ENCODE measurements at regions of chr1 and their contacts with region 1.

Region 1: DNA sequence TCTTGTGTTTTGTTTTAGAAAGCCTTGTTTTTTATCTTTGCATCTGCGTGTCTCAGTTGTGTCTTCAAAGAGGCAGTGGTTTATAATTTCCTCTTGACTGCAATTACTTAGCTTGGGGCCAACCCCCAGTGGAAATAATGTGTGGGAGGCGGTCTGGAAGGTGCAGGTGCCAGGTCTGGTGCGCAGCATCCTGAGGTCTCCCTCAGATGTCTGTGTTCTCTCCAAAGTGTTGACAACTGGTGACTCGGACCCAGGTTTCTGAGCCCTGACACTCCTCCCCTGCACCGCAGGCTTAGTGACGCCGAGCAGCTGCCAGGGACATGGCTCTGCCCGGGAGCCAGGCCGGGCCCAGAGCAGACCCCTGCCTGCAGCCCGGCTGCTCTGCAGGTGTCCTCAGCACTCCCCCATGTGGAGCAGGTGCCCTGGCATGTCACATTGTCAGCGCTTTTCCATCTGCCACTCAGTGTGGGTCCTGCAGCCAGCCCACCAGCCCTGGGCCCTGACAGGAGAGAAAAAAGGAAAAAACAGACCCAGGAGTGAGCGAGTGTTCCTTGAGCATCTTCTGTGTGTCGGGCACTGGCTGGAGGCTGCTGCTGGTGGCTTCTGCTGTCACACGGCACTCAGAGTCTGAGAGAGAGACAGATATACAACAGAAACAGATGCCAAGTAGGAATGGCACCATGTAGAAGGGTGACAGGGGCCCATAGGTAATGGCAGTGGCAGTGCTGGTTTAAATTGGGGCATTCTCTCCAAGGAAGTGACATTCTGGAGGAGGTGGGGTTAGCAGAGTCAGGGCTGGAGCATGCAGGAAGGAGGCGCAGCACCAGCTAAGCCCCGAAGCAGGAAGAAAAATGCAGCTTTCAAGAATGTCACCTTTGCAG is 24.8 kb upstream of the SELENON start:
- DNase-seq: peak; percentile 60 to 96 (median 84)
- ATAC-seq: peak; percentile 86
- H3K4me3 ChIP-seq: peak overlapping the region in 1 of 2 experiments; percentile 59
- H3K4me3 Mint-ChIP-seq: peak overlapping the region; percentile 83
- H3K27ac ChIP-seq: peak overlapping the region; percentile 44 to 92
- H3K27ac Mint-ChIP-seq: peak overlapping the region; percentile 99
- H3K4me1 ChIP-seq: peaks cover 63% of the 10 kb centered on the region
- H3K4me1 Mint-ChIP-seq: peaks cover 76% of the 10 kb centered on the region
- H3K27me3 ChIP-seq: no peaks in the 10 kb centered on the region
- H3K27me3 Mint-ChIP-seq: no peaks in the 10 kb centered on the region
- CTCF ChIP-seq: no peak

Region 2: GRCh38 chr1:25608488-25609178 is 166.5 kb before region 1 on chr1:
- CTCF ChIA-PET with region 1: interaction called, 12 read pairs
- POLR2A ChIA-PET with region 1: interaction called, 5 read pairs
- intact Hi-C with region 1: loop called in 1 of 2 experiments (anchors 2 kb)
- DNase-seq: peak; percentile 63 to 93 (median 90)
- ATAC-seq: peak; percentile 99
- H3K4me3 ChIP-seq: no peak overlapping the region
- H3K4me3 Mint-ChIP-seq: no peak overlapping the region
- H3K27ac ChIP-seq: no peak overlapping the region
- H3K27ac Mint-ChIP-seq: no peak overlapping the region
- H3K4me1 ChIP-seq: peaks cover 3% of the 10 kb centered on the region
- H3K4me1 Mint-ChIP-seq: peaks cover 12% of the 10 kb centered on the region
- H3K27me3 ChIP-seq: no peaks in the 10 kb centered on the region
- H3K27me3 Mint-ChIP-seq: no peaks in the 10 kb centered on the region
- CTCF ChIP-seq: no peak

Region 3: GRCh38 chr1:25675729-25676476 is 99.3 kb before region 1 on chr1:
- CTCF ChIA-PET with region 1: interaction called, 6 read pairs
- POLR2A ChIA-PET with region 1: interaction called, 8 read pairs
- intact Hi-C with region 1: loop called (anchors 5 kb)
- DNase-seq: peak; percentile 36 to 90 (median 74)
- ATAC-seq: peak; percentile 80
- H3K4me3 ChIP-seq: peak overlapping the region; percentile 14 to 41
- H3K4me3 Mint-ChIP-seq: peak overlapping the region; percentile 80
- H3K27ac ChIP-seq: peak overlapping the region; percentile 38 to 45
- H3K27ac Mint-ChIP-seq: peak overlapping the region; percentile 94
- H3K4me1 ChIP-seq: peaks cover 71% of the 10 kb centered on the region
- H3K4me1 Mint-ChIP-seq: peaks cover 88% of the 10 kb centered on the region
- H3K27me3 ChIP-seq: no peaks in the 10 kb centered on the region
- H3K27me3 Mint-ChIP-seq: no peaks in the 10 kb centered on the region
- CTCF ChIP-seq: no peak

Region 4: DNA sequence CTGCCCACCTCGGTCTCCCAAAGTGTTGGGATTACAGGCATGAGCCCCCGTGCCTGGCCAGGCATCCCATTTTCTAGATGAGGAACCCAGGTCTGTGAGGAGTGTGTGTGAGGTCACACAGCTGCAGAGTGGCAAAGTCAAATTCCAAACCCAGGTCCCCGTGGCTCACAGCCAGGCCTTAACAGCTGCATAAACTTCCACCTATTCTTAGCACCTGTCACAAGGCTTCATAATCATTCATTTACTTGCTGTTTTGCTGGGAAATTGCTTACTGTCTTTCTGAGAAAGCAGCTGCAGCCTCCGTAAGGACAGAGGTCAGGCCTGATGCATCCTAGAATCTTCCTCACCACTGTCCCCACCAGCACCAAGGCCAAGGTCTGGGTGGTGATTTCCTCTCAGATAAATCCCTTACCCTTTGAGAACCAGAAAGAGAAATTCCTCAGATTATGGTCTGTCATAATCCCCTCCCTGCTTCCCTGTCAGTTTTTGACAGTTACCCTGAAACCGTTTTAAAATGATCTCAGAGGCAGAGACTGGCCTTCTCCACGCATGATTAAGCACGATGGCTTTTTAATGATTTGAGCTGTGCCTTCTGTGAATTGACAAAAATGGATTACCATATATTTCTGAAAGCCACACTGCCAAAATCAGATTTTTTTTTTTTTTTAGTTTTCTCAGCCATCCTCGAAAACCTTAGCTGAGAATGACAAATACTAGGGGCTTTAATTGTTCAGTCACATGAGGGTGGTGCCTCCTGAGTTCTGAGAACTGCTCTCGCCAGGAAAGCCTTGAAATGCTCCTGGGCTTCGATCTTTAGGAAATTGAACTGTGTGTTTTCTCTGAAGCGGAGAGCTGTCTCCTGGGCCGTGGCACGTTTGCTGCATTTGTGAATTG is 45.2 kb before region 1 on chr1:
- CTCF ChIA-PET with region 1: interaction called, 3 read pairs
- POLR2A ChIA-PET with region 1: no interaction called
- intact Hi-C with region 1: loop called in 1 of 2 experiments (anchors 2 kb)
- DNase-seq: no peak
- ATAC-seq: peak; percentile 16
- H3K4me3 ChIP-seq: no peak overlapping the region
- H3K4me3 Mint-ChIP-seq: peak overlapping the region; percentile 18
- H3K27ac ChIP-seq: no peak overlapping the region
- H3K27ac Mint-ChIP-seq: peak overlapping the region; percentile 41
- H3K4me1 ChIP-seq: peaks cover 44% of the 10 kb centered on the region
- H3K4me1 Mint-ChIP-seq: peaks cover 76% of the 10 kb centered on the region
- H3K27me3 ChIP-seq: peaks cover 0 to 4% of the 10 kb centered on the region in 2 experiments
- H3K27me3 Mint-ChIP-seq: no peaks in the 10 kb centered on the region
- CTCF ChIP-seq: no peak

Region 5: DNA sequence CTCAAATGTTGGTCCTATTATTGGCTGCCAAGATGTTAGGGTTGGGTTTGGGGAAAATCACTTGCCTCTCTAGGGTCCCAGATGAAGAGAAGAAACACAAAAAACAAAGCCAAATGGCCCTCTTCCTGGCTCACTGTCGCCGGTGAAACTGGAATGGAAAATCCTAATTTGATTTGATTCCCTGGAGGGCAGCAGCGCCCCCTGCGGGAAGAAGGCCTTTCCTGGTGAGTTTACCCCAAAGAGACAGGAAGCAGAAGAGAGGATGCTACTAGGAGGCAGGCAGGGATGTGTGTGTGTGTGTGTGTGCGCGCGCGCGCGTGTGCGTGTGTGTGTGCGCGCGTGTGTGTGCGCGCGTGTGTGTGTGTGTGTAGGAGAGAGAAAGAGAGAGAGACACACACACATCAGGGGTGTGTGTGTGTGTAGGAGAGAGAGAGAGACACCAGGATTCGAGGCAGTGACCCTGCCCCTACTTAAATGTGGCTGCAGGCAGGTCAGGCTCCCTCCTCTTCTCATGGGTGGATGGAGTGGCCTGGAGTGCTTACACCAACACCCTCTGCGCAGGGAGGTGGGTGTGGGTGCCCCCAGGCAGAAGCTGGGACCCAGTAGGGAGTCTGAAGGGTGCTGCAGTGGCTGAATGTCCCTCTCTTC is 21.8 kb after region 1 on chr1:
- CTCF ChIA-PET with region 1: interaction called, 10 read pairs
- POLR2A ChIA-PET with region 1: interaction called, 7 read pairs
- intact Hi-C with region 1: loop called (anchors 1 kb)
- DNase-seq: peak; percentile 64 to 89 (median 86)
- ATAC-seq: peak; percentile 48
- H3K4me3 ChIP-seq: peak overlapping the region in 1 of 2 experiments; percentile 12
- H3K4me3 Mint-ChIP-seq: peak overlapping the region; percentile 75
- H3K27ac ChIP-seq: peak overlapping the region; percentile 33 to 62
- H3K27ac Mint-ChIP-seq: peak overlapping the region; percentile 97
- H3K4me1 ChIP-seq: peaks cover 52% of the 10 kb centered on the region
- H3K4me1 Mint-ChIP-seq: peaks cover 70% of the 10 kb centered on the region
- H3K27me3 ChIP-seq: no peaks in the 10 kb centered on the region
- H3K27me3 Mint-ChIP-seq: no peaks in the 10 kb centered on the region
- CTCF ChIP-seq: peak; percentile 62